Activated B cell treated with CpG ODN at 0.5 μM for 24 hours (primary cell): ENCODE measurements at regions of chr2 and their contacts with region 1.

Region 1: DNA sequence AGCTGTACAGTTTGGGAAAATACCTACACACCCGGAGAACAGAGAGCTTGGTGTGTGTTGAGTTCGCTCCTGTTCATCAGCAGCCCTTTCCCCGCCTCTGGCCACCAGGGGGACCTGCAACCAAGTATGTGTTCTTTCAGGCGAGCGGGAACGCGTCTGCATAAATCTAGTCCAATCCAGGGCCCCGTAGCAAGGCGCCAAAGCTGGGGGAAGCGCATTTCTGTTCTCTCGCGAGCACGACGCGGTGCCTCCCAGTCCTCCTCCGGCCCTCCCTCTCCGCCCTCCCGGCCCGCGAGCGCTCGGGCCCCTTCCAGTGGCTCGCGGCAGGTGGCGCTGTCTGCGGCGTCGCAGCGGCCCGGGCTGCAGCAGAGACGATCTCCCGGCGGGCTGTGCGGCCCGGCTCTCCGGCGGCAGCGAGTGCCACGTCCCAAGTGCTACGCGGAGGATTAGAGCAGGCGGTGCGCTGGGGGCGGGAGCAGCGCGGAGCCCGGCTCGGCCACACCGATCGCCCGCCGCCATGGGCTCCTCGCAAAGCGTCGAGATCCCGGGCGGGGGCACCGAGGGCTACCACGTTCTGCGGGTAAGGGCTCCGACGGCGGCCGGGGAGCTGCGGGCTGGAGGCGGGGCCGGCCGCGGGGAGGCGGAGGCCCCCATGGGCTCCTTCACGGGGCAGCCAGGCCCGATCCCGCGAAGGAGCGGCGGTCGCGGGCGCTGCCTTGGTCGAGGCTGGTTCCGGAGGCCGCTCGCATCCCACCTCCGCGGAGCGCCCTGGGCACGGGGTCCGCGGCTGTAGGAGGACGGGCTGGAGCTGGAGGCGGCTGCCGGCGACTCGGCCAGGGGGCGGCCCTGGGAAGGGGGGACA is at the start of gene GORASP2:
- DNase-seq: peak; percentile 96
- ATAC-seq: peak; percentile 93
- H3K4me3 Mint-ChIP-seq: peak within 1 kb of the TSS; percentile 90
- H3K27ac Mint-ChIP-seq: peak within 1 kb of the TSS; percentile 88
- H3K4me1 Mint-ChIP-seq: peaks cover 38% of the 10 kb centered on the region
- H3K27me3 Mint-ChIP-seq: no peaks in the 10 kb centered on the region
- CTCF ChIP-seq: peak; percentile 75
- total RNA-seq, gene GORASP2: 60.7 and 69.7 TPM in 2 replicates

Region 2: DNA sequence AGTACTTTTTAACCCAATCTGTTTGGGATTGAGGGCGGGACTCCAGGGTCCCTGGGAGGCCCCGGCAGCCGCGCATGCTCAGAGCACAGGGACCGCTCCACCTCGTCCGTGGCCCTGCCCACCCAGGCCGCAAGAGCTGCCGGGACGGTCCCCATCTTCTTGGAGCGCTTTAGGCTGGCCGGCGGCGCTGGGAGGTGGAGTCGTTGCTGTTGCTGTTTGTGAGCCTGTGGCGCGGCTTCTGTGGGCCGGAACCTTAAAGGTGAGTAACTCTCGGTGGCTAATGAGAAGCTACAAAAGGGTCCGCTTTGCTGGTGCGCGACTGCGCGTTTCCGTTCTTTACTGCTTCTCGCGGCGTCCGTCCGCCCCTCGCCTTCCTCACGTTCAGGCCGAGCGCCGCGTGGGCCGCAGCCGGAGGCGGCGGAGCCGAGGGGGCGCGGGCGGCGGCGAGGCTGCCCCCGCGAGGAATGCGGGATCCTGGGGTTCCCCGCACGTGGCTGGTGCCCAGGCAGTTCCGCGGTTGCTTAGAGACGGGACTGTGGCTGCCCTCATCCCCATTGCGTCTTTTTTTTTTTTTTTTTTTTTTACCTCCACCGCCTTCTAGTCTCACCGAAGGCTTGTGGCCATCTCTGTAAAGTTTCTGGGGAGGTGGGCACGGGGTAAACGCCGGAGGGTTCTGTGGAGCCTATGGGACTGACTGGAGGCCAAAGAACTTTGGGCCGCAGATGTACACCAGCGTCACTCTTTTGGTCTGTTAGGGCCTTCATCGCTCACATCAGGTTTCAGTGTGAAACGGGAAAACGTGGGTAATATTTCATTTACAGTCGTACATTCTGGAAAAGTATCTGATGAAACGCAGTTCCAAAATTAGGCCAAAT is 1130.1 kb before region 1 on chr2 and contains the start of gene SSB:
- CTCF ChIA-PET with region 1: no interaction called
- POLR2A ChIA-PET with region 1: no interaction called
- intact Hi-C with region 1: loop called (anchors 2 kb)
- DNase-seq: peak; percentile 89
- ATAC-seq: peak; percentile 96
- H3K4me3 Mint-ChIP-seq: peak within 1 kb of the TSS; percentile 91
- H3K27ac Mint-ChIP-seq: peak within 1 kb of the TSS; percentile 94
- H3K4me1 Mint-ChIP-seq: peaks cover 22% of the 10 kb centered on the region
- H3K27me3 Mint-ChIP-seq: no peaks in the 10 kb centered on the region
- CTCF ChIP-seq: no peak
- total RNA-seq, gene SSB: 94.7 and 100 TPM in 2 replicates

Region 3: GRCh38 chr2:170950221-170950761 is 21.2 kb after region 1 on chr2:
- CTCF ChIA-PET with region 1: interaction called, 7 read pairs
- POLR2A ChIA-PET with region 1: interaction called, 6 read pairs
- intact Hi-C with region 1: loop called (anchors 1 kb)
- DNase-seq: no peak
- ATAC-seq: peak; percentile 79
- H3K4me3 Mint-ChIP-seq: peak overlapping the region; percentile 25
- H3K27ac Mint-ChIP-seq: peak overlapping the region; percentile 71
- H3K4me1 Mint-ChIP-seq: peaks cover 20% of the 10 kb centered on the region
- H3K27me3 Mint-ChIP-seq: no peaks in the 10 kb centered on the region
- CTCF ChIP-seq: no peak

Region 4: GRCh38 chr2:171180229-171180930 is 251.3 kb after region 1 on chr2:
- CTCF ChIA-PET with region 1: no interaction called
- POLR2A ChIA-PET with region 1: no interaction called
- intact Hi-C with region 1: no loop called
- DNase-seq: no peak
- ATAC-seq: no peak
- H3K4me3 Mint-ChIP-seq: no peak overlapping the region
- H3K27ac Mint-ChIP-seq: no peak overlapping the region
- H3K4me1 Mint-ChIP-seq: peaks cover 23% of the 10 kb centered on the region
- H3K27me3 Mint-ChIP-seq: no peaks in the 10 kb centered on the region
- CTCF ChIP-seq: no peak

Region 5: DNA sequence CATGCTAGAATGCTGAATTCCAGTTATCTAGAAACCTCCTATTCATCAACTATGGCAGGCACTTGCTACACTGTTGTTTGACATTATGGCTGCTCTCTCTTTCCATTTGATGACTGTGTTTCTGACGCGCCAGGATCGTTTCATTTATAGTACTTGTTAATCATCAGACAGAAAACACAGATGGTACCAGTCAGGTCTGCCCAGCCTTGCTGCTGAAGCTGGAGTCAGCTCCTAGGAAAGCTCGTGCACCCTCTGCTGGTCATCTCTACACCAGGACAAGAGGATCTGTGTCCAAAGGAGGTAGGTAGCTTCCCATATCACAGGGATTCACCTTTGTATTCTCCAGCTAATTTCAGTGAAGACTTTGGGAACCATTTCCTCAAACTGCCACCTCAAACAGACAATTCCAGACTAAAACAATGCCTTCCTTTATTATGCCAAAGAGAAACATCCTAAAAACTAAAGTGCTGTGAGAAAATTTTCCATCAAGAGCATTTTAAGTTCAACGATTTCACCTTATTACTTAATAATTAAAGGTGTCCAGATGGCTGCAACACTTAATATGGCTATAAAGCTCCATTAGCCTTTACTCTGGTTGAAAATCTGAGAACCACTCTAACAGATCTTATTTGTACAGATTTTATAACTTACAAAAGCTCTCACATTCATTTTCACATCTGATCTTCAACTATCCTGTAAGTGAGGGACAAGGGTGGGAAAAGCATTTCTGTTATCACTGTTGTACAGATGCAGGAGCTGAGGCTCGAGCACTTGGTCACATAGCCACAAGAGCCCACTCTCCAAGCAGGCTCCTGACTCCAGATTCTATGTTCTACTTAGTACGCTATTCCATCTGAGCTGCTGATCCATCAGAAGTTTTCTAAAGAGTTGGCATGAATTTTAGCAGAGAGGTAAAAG is 487.2 kb after region 1 on chr2:
- CTCF ChIA-PET with region 1: interaction called, 14 read pairs
- POLR2A ChIA-PET with region 1: interaction called, 3 read pairs
- intact Hi-C with region 1: loop called (anchors 1 kb)
- DNase-seq: peak; percentile 52
- ATAC-seq: peak; percentile 97
- H3K4me3 Mint-ChIP-seq: peak overlapping the region; percentile 3
- H3K27ac Mint-ChIP-seq: peak overlapping the region; percentile 82
- H3K4me1 Mint-ChIP-seq: peaks cover 19% of the 10 kb centered on the region
- H3K27me3 Mint-ChIP-seq: no peaks in the 10 kb centered on the region
- CTCF ChIP-seq: peak; percentile 94

Region 6: GRCh38 chr2:171687287-171688128 is 758.5 kb after region 1 on chr2 and contains the start of gene DYNC1I2:
- CTCF ChIA-PET with region 1: no interaction called
- POLR2A ChIA-PET with region 1: no interaction called
- intact Hi-C with region 1: loop called (anchors 1 kb)
- DNase-seq: peak; percentile 70
- ATAC-seq: peak; percentile 87
- H3K4me3 Mint-ChIP-seq: peak within 1 kb of the TSS; percentile 95
- H3K27ac Mint-ChIP-seq: peak within 1 kb of the TSS; percentile 88
- H3K4me1 Mint-ChIP-seq: peaks cover 17% of the 10 kb centered on the region
- H3K27me3 Mint-ChIP-seq: peaks cover 2% of the 10 kb centered on the region
- CTCF ChIP-seq: no peak
- total RNA-seq, gene DYNC1I2: 52.0 and 54.6 TPM in 2 replicates

Region 7: DNA sequence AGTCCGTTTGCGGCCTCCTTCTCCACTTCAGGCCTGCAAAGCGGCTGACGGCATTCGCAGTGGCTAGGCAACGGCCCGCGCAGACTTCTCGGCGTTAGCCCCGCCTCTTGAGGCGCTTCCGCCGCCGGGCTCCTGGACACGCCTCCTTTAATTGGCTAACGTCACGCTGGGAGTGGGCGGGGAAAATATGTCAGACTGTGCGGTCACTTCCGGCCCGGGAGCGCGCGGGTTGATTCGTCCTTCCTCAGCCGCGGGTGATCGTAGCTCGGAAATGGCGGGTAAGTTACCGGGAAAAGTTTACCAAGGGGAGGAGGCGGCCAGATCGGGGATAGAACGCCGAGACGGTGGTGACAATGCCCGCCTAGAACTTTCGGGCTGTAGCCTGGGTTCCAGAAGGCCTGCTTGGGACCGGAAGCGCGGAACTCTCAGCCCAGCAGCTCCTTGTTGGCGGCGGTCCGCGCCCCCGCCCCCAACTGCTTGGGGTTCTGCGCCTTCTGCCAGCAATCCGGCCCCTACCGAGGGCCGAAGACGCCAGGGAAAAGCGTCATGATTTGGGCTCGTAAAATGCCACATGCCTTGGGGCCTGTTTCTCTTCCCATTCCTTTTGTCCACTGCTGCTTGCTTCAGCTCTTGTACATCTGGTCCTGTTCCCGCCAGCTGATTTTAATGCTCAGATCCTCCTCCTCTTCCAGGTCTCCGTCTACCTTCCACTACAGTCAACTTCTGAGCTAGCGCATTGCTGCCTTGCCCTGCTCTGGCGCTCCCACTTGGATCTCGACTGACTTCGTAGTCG is 993.4 kb after region 1 on chr2 and contains the start of gene HAT1:
- CTCF ChIA-PET with region 1: no interaction called
- POLR2A ChIA-PET with region 1: no interaction called
- intact Hi-C with region 1: loop called (anchors 2 kb)
- DNase-seq: peak; percentile 94
- ATAC-seq: peak; percentile 97
- H3K4me3 Mint-ChIP-seq: peak within 1 kb of the TSS; percentile 100
- H3K27ac Mint-ChIP-seq: peak within 1 kb of the TSS; percentile 99
- H3K4me1 Mint-ChIP-seq: peaks cover 33% of the 10 kb centered on the region
- H3K27me3 Mint-ChIP-seq: no peaks in the 10 kb centered on the region
- CTCF ChIP-seq: no peak
- total RNA-seq, gene HAT1: 35.9 and 36.2 TPM in 2 replicates